ENCODE measurements at regions of chr9 and their contacts with region 1.

Region 1: DNA sequence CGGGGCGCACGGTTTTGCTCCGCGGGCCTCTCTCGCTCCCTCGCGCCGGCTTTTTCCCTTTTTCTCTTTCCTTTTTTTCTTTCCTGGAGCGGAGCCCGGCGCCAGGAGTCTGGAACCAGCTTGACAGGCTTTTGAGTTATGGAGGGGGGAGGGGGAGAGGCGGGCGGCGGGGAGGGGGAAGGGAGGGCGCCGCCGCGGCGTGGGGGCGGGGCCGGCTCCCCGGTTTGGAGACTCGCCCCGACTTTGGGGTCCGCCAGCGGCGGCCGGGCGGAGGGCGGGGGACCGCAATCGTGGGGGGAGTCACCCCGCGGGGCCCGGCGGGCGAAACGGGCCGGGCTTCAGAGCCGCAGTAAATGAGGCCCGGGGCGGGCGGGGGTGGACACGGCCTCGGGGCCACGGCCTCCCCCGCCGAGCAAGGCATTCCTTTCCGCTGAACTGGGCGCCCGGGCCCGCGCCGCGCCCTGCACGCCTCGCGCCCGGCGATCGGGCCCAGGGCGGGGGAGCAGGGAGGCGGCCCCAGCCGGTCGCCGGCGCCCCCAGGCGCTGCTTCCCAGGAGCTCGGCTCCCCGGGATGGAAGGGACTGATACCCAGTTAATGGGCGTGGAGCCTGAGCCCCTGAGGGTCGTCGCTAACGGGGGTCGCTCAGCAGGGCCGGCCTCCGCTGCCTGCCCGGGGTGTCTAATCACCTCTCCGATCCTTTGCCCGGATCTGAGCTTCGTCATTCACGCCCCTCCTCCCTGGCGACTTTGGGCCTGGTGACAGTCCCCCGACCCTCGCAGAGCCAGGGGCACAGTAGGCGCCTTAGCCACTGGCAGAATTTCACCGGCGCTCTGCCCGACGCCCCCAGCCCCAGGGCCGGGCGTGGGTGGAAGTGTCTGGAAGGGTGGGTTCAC is 138.1 kb downstream of the C9orf50 start:
- DNase-seq: peak; percentile 84 to 93
- ATAC-seq: peak; percentile 49 to 83 (median 64)
- H3K4me3 ChIP-seq: peak overlapping the region; percentile 34 to 71 (median 62)
- H3K27ac ChIP-seq: peak overlapping the region; percentile 98 to 100 (median 100)
- H3K4me1 ChIP-seq: peaks cover 37 to 87% (median 64%) of the 10 kb centered on the region in 9 donors
- H3K27me3 ChIP-seq: no peaks in the 10 kb centered on the region
- CTCF ChIP-seq: peak in 3 of 9 donors; percentile 13 to 42 (median 29)

Region 2: GRCh38 chr9:128286440-128286839 is 1196.3 kb before region 1 on chr9:
- intact Hi-C with region 1: no loop called
- DNase-seq: peak; percentile 47 to 59
- ATAC-seq: peak; percentile 58 to 88 (median 75)
- H3K4me3 ChIP-seq: no peak overlapping the region
- H3K27ac ChIP-seq: no peak overlapping the region
- H3K4me1 ChIP-seq: peaks cover 0 to 8% (median 0%) of the 10 kb centered on the region in 9 donors
- H3K27me3 ChIP-seq: no peaks in the 10 kb centered on the region
- CTCF ChIP-seq: no peak

Region 3: DNA sequence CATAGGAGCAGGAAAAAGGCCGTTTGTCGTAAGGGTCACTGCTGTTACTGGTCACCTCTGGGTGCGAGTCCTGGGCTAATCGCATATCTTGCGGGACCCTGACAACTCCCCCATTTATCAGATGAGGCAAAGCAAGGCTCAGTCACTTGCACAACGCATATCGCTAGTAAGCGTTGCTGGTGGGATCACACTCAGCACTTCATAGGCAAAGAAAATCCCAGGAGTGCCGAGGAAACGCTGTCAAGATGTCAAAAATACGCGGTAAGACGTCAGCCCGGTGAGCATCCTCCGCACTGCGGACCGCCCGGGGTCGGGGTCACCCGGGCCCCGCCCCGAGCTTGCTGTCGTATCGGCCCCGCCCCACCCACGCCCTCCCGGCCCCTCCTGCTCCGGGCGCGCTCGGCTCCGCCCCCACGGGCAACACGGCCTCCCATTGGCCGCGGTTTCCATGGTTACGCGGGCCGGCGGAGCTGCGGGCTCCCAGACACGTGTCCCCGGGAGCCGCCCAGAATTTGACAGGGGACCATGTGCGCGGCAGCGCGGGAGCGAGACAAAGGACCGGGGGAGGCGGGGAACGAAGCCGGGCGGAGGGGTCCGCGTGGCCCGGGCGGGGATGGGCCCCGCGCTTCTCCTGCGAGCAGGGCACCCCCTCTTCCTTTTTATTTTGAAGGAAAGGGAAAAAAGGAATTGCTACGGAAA is 224.5 kb before region 1 on chr9:
- intact Hi-C with region 1: loop called in 2 of 10 experiments (anchors 10 kb)
- DNase-seq: peak; percentile 91 to 94
- ATAC-seq: peak; percentile 70 to 85 (median 80)
- H3K4me3 ChIP-seq: peak overlapping the region in 8 of 10 donors; percentile 5 to 46 (median 34)
- H3K27ac ChIP-seq: peak overlapping the region in 6 of 10 donors; percentile 9 to 59 (median 51)
- H3K4me1 ChIP-seq: peaks cover 5 to 53% (median 36%) of the 10 kb centered on the region in 9 donors
- H3K27me3 ChIP-seq: peaks cover 0 to 19% (median 0%) of the 10 kb centered on the region in 7 donors
- CTCF ChIP-seq: no peak

Region 4: DNA sequence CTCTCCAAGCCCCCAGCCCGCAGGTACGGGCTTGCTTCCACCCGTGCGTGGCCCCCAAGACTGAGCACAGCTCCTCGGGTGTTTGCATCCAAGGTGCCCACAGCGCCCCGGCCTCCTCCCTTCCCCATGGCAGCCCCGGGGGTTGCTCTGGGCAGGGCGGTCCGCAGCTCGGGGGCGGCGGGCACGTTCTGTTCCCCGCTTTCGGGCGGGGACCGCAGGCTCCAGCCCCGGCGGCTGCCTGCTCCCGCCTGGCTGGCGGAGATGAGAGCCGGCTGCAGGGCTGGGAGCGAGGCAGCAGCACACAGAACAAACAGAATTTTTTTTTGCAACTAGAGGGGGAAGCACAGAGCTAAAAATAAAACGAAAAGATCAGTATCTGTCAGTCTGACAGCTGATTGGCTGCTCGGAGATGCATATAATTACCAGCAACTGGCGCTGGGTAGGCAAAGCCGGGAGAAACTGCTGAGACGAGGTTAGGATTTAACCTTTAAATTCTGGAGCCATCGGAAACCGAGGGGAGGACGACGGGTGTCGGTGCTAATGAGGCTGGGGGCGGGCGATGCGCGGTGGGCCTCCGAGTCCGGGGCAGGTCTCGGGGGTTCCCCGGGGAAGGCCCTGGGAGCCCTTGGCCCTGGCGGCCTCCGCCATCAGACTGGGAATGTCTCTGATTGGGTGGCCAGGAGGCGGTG is 162.0 kb before region 1 on chr9:
- intact Hi-C with region 1: loop called in 1 of 10 experiments (anchors 5 kb)
- DNase-seq: peak; percentile 68 to 74
- ATAC-seq: peak; percentile 76 to 85 (median 83)
- H3K4me3 ChIP-seq: peak overlapping the region; percentile 3 to 63 (median 51)
- H3K27ac ChIP-seq: peak overlapping the region; percentile 85 to 95 (median 90)
- H3K4me1 ChIP-seq: peaks cover 29 to 85% (median 61%) of the 10 kb centered on the region in 9 donors
- H3K27me3 ChIP-seq: no peaks in the 10 kb centered on the region
- CTCF ChIP-seq: peak in 8 of 9 donors; percentile 6 to 47 (median 38)

Region 5: GRCh38 chr9:129333953-129334724 is 148.6 kb before region 1 on chr9:
- intact Hi-C with region 1: loop called in 4 of 10 experiments (anchors 2 to 10 kb)
- DNase-seq: peak; percentile 88 to 89
- ATAC-seq: peak; percentile 87 to 95 (median 91)
- H3K4me3 ChIP-seq: peak overlapping the region in 8 of 10 donors; percentile 2 to 39 (median 29)
- H3K27ac ChIP-seq: peak overlapping the region; percentile 69 to 96 (median 88)
- H3K4me1 ChIP-seq: peaks cover 19 to 60% (median 53%) of the 10 kb centered on the region in 9 donors
- H3K27me3 ChIP-seq: no peaks in the 10 kb centered on the region
- CTCF ChIP-seq: peak in 4 of 9 donors; percentile 7 to 22 (median 11)

Region 6: DNA sequence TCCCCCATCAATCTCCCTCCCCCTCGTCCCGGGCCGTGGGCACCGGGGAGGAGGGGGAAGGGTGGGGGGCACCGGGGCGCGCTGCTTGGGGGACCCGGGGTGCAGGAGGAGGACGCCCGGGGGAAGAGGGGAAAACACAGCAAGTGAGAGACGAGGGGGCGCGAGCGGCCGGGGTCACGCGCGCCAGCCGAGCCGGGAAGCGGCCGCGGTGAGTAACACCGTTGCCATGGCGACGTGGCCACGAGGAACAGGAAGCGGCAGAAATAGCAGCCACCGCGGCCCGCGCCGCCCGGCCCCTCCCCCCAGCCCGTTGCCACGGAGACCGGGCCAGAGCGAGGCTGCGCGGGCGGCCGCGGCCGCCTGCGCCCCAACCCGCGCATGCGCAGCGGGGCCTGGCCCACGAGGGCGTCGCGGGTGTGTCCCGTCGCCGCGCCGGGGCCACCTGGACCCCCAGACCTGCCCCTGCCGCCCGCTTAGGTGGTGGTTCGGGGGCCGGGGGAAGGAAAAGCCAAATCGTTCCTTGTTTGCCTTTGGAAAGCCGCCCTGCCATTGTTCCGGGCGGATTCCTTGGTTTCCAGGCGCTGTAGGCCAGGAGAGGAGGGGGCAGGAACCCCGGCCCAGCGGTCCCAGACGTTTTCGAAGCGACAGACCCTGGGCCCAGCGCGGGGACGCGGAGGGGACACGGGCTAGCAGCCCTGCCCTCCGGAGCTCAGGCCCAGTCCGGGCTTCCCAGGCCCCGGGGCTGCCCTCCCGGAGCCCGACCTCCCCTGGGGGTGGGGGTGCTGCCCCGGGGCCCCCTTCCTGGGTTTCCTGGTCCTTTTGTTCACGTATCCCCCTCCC is 69.0 kb before region 1 on chr9:
- intact Hi-C with region 1: loop called in 8 of 10 experiments (anchors 2 to 10 kb)
- DNase-seq: peak; percentile 99 to 100
- ATAC-seq: peak; percentile 85 to 92 (median 88)
- H3K4me3 ChIP-seq: peak overlapping the region; percentile 47 to 74 (median 61)
- H3K27ac ChIP-seq: peak overlapping the region; percentile 97 to 100 (median 100)
- H3K4me1 ChIP-seq: peaks cover 18 to 53% (median 31%) of the 10 kb centered on the region in 9 donors
- H3K27me3 ChIP-seq: no peaks in the 10 kb centered on the region
- CTCF ChIP-seq: no peak

Region 7: DNA sequence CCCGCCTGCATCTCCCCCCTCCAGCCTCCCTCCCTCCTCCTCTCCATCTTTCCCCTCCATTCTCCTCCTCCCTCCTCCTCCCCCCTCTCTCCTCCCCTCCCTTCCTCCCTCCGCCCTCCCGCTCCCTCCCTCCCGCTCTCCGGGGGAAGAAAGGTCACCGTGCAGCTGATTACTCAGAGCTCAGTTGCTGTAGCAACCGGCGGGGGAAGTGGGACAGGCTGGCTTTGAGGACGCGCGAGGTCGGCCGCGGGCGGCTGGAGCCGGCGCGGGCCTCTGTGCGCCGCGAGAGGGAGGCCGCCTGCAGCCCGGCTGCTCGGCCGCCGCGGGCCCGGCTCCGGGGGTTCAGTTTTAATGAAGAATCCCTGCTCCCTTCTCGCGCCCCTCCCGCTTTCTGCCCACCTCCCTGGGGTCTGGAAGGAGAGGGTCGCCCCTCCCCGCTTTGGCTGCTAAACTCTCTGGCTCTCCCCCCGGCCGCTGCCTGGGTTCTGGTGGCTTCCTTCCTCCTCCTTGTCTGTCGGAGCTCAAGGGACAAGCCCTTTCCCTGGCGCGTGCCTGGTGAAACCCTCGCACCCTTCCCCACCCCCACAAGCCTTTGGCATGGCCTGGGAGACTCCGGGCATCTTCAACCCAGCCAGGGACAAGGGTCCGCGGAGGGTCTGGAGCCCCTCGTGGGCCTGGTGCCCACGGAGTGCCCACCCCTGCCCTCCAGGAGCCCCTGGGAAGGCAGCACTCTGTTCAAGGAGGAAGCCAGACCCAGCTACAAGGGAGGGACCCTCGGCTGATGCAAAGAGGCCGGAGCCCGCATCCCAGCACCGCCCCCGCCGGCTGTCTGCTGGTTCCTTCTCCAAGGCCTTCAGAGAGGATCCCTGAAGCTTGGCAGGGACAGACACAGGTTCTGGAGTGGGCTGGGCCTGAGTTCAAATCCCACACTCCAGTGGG is 22.2 kb before region 1 on chr9:
- intact Hi-C with region 1: loop called in 5 of 10 experiments (anchors 1 to 2 kb)
- DNase-seq: peak; percentile 95 to 98
- ATAC-seq: peak; percentile 88 to 95 (median 91)
- H3K4me3 ChIP-seq: peak overlapping the region in 9 of 10 donors; percentile 30 to 57 (median 50)
- H3K27ac ChIP-seq: peak overlapping the region; percentile 86 to 100 (median 98)
- H3K4me1 ChIP-seq: peaks cover 28 to 52% (median 46%) of the 10 kb centered on the region in 9 donors
- H3K27me3 ChIP-seq: no peaks in the 10 kb centered on the region
- CTCF ChIP-seq: peak in 5 of 9 donors; percentile 11 to 59 (median 31)